ENCODE measurements at regions of chr2 and their contacts with region 1.

Region 1: GRCh38 chr2:86054535-86055082 is 51.1 kb downstream of the POLR1A start:
- DNase-seq: peak; percentile 12
- H3K4me3 Mint-ChIP-seq: no peak overlapping the region
- H3K27ac Mint-ChIP-seq: no peak overlapping the region
- H3K4me1 Mint-ChIP-seq: no peaks in the 10 kb centered on the region
- H3K27me3 Mint-ChIP-seq: no peaks in the 10 kb centered on the region

Region 2: GRCh38 chr2:86028766-86029381 is 25.7 kb before region 1 on chr2:
- CTCF ChIA-PET with region 1: no interaction called
- POLR2A ChIA-PET with region 1: no interaction called
- DNase-seq: no peak
- H3K4me3 Mint-ChIP-seq: no peak overlapping the region
- H3K27ac Mint-ChIP-seq: no peak overlapping the region
- H3K4me1 Mint-ChIP-seq: peaks cover under 1% of the 10 kb centered on the region
- H3K27me3 Mint-ChIP-seq: no peaks in the 10 kb centered on the region

Region 3: DNA sequence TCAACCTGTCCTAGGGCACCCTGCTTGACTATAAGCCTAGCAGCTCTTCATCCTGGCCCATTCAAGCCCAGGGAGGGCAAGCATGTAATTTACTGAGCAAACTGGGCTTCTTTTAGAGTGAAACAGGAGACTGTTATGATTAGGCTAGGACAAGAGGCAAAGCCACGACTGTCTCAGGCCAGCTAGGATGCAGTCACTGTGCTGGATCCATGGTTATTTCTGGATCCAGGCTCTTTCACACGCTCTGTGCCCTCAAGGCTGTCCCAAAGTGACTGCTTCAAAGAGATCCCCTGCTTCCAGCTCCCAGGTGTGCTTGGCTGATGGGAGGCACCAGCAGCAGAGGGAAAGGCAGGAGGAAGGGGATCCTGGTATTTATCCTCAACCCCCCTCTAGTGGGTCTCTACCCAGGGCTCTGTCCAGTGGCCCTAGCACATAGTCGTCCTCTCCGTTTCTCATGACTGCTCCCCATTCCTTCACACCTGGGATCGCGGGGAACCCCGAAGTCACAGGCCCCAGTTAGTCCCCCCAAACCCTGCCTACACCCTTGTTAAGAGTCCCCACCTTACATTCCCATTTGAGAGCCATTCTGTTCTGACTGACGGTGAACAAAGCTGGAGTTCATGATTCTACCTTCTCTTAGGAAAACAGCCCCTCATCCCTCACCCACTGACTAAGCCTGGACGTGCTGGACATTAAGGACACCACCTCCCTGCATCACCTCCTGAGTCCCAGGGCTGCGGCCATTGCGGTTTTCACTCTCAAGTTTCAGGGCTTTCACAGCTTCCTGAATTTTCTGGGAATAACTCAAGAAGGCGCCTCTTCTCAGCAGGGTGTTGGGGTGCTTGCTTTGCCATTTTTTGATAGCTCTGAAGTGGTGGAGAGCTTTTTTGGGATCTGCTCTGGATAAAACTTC is 12.1 kb before region 1 on chr2:
- CTCF ChIA-PET with region 1: interaction called, 12 read pairs
- POLR2A ChIA-PET with region 1: interaction called, 5 read pairs
- DNase-seq: peak; percentile 7
- H3K4me3 Mint-ChIP-seq: no peak overlapping the region
- H3K27ac Mint-ChIP-seq: peak overlapping the region; percentile 23
- H3K4me1 Mint-ChIP-seq: peaks cover 45% of the 10 kb centered on the region
- H3K27me3 Mint-ChIP-seq: no peaks in the 10 kb centered on the region